HepG2 (cell line): ENCODE measurements at regions of chr13 and their contacts with region 1.

Region 1: DNA sequence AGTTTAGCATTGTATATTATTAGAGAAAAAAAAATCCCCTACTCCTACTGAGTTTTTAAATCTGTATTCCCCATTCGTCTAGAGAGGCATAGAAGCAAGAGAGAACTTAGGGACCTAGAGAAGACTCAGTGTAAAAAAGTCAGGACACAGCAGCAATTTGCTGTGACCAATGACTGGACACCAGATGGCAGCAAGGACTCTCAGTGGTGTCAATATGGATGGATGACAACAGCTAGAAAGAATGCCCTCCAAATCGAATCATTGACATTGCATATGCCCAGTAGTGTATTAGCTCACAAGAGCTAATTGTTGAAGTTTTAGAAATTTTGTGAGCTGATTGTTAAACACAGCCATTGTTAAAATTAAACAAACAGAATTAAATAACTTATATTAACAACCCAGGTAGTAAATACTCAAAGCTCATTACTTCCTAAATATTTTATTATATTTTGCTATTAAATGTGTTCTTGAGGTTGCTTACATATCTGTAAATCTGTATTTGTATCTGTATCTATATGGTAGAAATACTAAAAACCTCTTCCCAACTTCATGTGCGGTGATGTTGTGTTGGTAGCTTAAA is 43.9 kb downstream of the SIAH3 start:
- DNase-seq: peak; percentile 60
- ATAC-seq: peak; percentile 93
- H3K4me3 ChIP-seq: no peak overlapping the region
- H3K27ac ChIP-seq: no peak overlapping the region
- H3K4me1 ChIP-seq: no peaks in the 10 kb centered on the region
- H3K27me3 ChIP-seq: no peaks in the 10 kb centered on the region
- CTCF ChIP-seq: peak; percentile 78
- EP300 ChIP-seq: no peak
- POLR2A ChIP-seq: no peak
- RAD21 ChIP-seq: peak; percentile 36; the same call in 1 of the 2 replicates

Region 2: DNA sequence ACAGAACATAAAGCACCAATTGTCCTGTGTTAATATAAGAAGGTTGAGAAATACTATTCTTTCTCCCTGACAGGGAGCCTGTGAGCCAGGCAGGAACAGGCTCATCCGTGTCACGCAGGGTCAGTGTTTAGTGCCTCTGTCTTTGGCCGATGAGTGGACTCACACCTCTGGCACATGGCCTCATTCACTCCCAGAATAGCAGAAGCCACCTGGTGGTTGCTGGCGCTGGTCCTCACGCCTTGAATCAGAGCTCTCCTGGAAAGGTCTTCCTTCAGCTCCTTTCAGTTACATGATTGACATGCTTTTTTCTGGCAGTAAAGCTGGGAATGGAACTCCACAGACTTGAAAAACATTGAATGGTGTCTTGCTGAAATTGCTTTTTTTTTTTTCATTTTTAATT is 72.1 kb after region 1 on chr13:
- CTCF ChIA-PET with region 1: interaction called, 5 read pairs
- POLR2A ChIA-PET with region 1: no interaction called
- in situ Hi-C with region 1: no loop called
- intact Hi-C with region 1: loop called (anchors 2 kb)
- DNase-seq: peak; percentile 39
- ATAC-seq: peak; percentile 98
- H3K4me3 ChIP-seq: no peak overlapping the region
- H3K27ac ChIP-seq: no peak overlapping the region
- H3K4me1 ChIP-seq: no peaks in the 10 kb centered on the region
- H3K27me3 ChIP-seq: no peaks in the 10 kb centered on the region; a peak in 1 of 5 replicates
- CTCF ChIP-seq: peak; percentile 59
- EP300 ChIP-seq: no peak
- POLR2A ChIP-seq: no peak
- RAD21 ChIP-seq: no peak

Region 3: DNA sequence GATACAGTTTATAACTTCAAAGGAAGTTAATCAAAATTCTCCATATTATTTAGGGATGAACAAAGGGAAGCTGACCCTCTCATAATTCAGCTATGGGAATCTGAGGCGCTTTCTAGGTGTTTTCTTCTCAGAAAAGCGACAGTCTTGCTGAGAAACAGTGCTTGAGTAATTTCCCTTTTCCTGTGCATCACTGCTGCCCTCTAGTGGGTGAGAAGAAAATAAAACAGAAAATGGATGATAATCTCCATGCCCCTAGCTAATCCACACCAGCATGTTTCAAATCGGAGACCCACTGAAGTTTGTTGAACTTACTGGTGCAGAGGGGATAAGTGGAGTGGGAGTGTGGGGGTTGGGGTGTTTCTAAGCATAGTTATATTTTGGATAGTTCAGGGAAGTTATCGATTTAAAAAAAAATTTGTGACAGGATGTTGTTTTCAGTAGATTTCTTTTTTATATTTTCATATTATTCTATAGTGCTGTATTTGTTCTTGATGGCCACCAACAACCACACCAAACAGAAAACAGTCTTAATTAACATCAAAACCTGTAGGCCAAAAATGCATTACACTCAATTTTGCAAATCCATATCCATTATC is 353.0 kb after region 1 on chr13:
- CTCF ChIA-PET with region 1: interaction called, 4 read pairs
- POLR2A ChIA-PET with region 1: no interaction called
- in situ Hi-C with region 1: no loop called
- intact Hi-C with region 1: loop called (anchors 1 kb)
- DNase-seq: peak; percentile 58
- ATAC-seq: peak; percentile 64
- H3K4me3 ChIP-seq: no peak overlapping the region
- H3K27ac ChIP-seq: no peak overlapping the region
- H3K4me1 ChIP-seq: peaks cover 14% of the 10 kb centered on the region
- H3K27me3 ChIP-seq: no peaks in the 10 kb centered on the region
- CTCF ChIP-seq: peak; percentile 82
- EP300 ChIP-seq: no peak
- POLR2A ChIP-seq: no peak
- RAD21 ChIP-seq: peak; percentile 71

Region 4: DNA sequence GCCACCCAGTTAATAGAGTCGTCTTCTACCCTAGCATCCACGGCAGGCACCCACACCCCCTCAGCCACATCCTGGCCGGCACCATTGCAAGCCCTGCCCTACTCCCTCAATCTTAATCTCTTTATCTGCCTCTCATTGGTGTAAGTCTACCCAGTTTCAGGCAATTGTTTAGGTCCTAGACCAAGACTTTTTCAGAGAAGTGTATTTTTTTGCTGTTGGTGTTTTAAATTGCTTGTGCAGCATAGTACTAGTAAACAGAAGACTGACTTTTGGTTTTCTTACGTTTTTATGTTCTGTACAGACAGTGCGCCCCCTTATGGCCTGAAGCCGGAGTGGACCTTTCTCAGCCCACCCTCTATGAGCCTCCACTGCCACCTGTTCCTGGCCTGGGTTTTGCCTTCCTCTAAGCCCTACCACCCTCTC is 376.7 kb after region 1 on chr13:
- CTCF ChIA-PET with region 1: no interaction called
- POLR2A ChIA-PET with region 1: no interaction called
- in situ Hi-C with region 1: no loop called
- intact Hi-C with region 1: loop called (anchors 1 kb)
- DNase-seq: peak; percentile 28
- ATAC-seq: peak; percentile 99
- H3K4me3 ChIP-seq: peak overlapping the region in 1 of 3 experiments; percentile 40; a peak in 1 of 6 replicates
- H3K27ac ChIP-seq: no peak overlapping the region
- H3K4me1 ChIP-seq: peaks cover 10% of the 10 kb centered on the region; the same call in 1 of the 2 replicates
- H3K27me3 ChIP-seq: 0 out of 5 replicates have a peak, but pooled peaks cover 0 to 4% of the 10 kb centered on the region in 2 experiments
- CTCF ChIP-seq: peak; percentile 66
- EP300 ChIP-seq: no peak
- POLR2A ChIP-seq: no peak
- RAD21 ChIP-seq: no peak

Region 5: GRCh38 chr13:46288570-46289259 is 481.1 kb after region 1 on chr13:
- CTCF ChIA-PET with region 1: no interaction called
- POLR2A ChIA-PET with region 1: no interaction called
- in situ Hi-C with region 1: no loop called
- intact Hi-C with region 1: loop called (anchors 1 kb)
- DNase-seq: peak; percentile 27
- ATAC-seq: peak; percentile 81
- H3K4me3 ChIP-seq: no peak overlapping the region
- H3K27ac ChIP-seq: no peak overlapping the region
- H3K4me1 ChIP-seq: no peaks in the 10 kb centered on the region
- H3K27me3 ChIP-seq: 0 out of 5 replicates have a peak, but pooled peaks cover 0 to 2% of the 10 kb centered on the region in 2 experiments
- CTCF ChIP-seq: peak; percentile 55
- EP300 ChIP-seq: no peak
- POLR2A ChIP-seq: no peak
- RAD21 ChIP-seq: no peak

Region 6: DNA sequence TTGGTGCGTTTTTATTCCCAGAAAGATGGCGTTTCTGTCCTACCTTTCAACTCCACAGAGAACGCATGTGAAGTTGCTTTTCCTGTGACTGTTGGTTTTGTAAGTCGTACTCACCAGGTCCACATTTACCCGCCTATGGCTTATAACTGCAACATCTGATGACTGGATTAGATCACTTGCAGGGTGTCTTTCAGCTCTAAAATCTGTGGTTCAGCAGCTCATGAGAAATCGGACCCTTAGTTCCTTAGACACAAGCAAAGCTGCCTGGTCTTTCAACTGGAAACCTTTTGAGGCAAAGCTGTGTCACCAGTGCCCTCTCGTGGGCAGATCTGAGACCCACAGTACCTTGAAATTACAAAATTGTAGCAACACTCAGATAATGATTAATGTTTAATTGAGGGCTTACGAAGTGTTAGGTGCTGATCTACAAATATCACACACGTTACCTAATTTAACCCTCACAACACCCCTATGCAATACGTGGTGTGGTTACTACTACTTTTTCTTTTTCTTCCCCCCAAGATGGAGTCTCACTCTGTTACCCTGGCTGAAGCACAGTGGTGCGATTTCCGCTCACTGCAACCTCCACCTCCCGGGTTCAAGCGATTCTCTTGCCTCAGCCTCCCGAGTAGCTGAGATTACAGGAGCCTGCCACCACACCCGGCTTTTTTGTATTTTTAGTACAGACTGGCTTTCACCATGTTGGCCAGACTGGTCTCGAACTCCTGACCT is 514.0 kb after region 1 on chr13:
- CTCF ChIA-PET with region 1: no interaction called
- POLR2A ChIA-PET with region 1: no interaction called
- in situ Hi-C with region 1: no loop called
- intact Hi-C with region 1: loop called (anchors 2 kb)
- DNase-seq: peak; percentile 18
- ATAC-seq: peak; percentile 92
- H3K4me3 ChIP-seq: no peak overlapping the region
- H3K27ac ChIP-seq: no peak overlapping the region
- H3K4me1 ChIP-seq: no peaks in the 10 kb centered on the region
- H3K27me3 ChIP-seq: peaks cover 0 to 12% of the 10 kb centered on the region in 2 experiments; a peak in 3 of 5 replicates
- CTCF ChIP-seq: peak; percentile 77
- EP300 ChIP-seq: no peak
- POLR2A ChIP-seq: no peak
- RAD21 ChIP-seq: peak; percentile 54